HepG2 (cell line): ENCODE measurements at regions of chr1 and their contacts with region 1.

Region 1: DNA sequence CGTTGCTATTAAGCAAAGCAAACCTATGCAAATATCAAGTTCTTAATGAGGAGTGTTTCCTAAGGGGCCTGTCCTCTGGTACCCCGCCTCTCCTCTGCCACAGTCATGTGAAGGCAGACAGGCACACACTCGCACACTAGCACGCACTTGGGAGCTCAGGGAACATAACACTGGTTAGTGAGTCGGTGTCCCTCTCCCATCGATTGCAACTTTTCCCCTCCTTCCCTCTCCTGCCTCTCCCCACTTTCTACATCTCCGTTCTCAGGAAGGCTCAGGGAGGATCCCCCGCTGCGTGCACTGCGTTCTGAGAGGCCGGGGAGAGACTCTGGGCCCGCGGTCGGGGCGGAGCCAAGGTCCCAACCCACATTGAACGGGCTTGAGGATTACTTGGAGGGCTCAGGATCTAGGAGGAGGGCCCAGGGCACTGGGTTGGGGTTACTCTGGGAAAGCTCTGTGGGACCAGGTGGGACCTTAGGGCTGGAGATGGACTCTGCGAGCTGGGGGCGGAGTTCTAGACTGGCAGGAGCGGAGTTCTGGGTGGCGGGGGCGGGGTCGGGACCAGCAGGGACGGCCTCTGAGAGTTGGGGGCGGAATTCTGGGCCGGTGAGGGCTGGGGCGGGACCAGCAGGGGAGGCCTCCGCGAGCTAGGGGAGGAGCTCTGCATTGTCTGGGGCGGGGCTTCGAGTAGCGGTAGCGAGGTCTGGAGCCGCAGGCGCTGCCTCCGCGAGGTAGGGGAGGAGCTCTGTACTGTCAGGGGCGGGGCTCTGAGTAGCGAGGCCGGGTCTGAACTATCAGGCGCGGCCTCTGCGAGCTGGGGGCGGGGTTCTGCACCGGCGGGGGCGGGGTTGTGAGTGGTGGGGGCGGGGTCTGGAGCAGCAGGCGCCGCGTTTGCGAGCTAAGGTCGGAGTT is 533 bp upstream of the LEPR start:
- DNase-seq: peak; percentile 93
- ATAC-seq: peak; percentile 92
- H3K4me3 ChIP-seq: peak overlapping the region; percentile 79 to 94 (median 80)
- H3K27ac ChIP-seq: peak overlapping the region; percentile 99
- H3K4me1 ChIP-seq: peaks cover 59% of the 10 kb centered on the region
- H3K27me3 ChIP-seq: no peaks in the 10 kb centered on the region; a peak in 1 of 5 replicates
- CTCF ChIP-seq: no peak
- EP300 ChIP-seq: no peak
- POLR2A ChIP-seq: peak; percentile 59 to 86; a peak in 3 of 4 replicates
- RAD21 ChIP-seq: no peak

Region 2: GRCh38 chr1:65067491-65068201 is 352.3 kb before region 1 on chr1:
- CTCF ChIA-PET with region 1: no interaction called
- POLR2A ChIA-PET with region 1: interaction called, 3 read pairs
- in situ Hi-C with region 1: no loop called
- intact Hi-C with region 1: loop called (anchors 10 kb)
- DNase-seq: peak; percentile 29
- ATAC-seq: peak; percentile 49
- H3K4me3 ChIP-seq: peak overlapping the region; percentile 64 to 84 (median 74)
- H3K27ac ChIP-seq: peak overlapping the region; percentile 26
- H3K4me1 ChIP-seq: peaks cover 14% of the 10 kb centered on the region; the same call in 1 of the 2 replicates
- H3K27me3 ChIP-seq: peaks cover 0 to 8% of the 10 kb centered on the region in 2 experiments; a peak in 2 of 5 replicates
- CTCF ChIP-seq: no peak
- EP300 ChIP-seq: no peak
- POLR2A ChIP-seq: peak in 1 of 2 experiments; percentile 54; a peak in 2 of 4 replicates
- RAD21 ChIP-seq: no peak

Region 3: GRCh38 chr1:65148548-65149350 is 271.2 kb before region 1 on chr1:
- CTCF ChIA-PET with region 1: no interaction called
- POLR2A ChIA-PET with region 1: interaction called, 3 read pairs
- in situ Hi-C with region 1: no loop called
- intact Hi-C with region 1: loop called (anchors 10 kb)
- DNase-seq: no peak
- ATAC-seq: peak; percentile 41
- H3K4me3 ChIP-seq: peak overlapping the region; percentile 75 to 90 (median 86)
- H3K27ac ChIP-seq: peak overlapping the region; percentile 78
- H3K4me1 ChIP-seq: peaks cover 69% of the 10 kb centered on the region
- H3K27me3 ChIP-seq: no peaks in the 10 kb centered on the region; a peak in 1 of 5 replicates
- CTCF ChIP-seq: 0 out of 2 replicates have a peak, but pooled peaks have one; percentile 3
- EP300 ChIP-seq: no peak
- POLR2A ChIP-seq: peak in 1 of 2 experiments; percentile 49; a peak in 2 of 4 replicates
- RAD21 ChIP-seq: no peak; the same call in 1 of the 2 replicates

Region 4: DNA sequence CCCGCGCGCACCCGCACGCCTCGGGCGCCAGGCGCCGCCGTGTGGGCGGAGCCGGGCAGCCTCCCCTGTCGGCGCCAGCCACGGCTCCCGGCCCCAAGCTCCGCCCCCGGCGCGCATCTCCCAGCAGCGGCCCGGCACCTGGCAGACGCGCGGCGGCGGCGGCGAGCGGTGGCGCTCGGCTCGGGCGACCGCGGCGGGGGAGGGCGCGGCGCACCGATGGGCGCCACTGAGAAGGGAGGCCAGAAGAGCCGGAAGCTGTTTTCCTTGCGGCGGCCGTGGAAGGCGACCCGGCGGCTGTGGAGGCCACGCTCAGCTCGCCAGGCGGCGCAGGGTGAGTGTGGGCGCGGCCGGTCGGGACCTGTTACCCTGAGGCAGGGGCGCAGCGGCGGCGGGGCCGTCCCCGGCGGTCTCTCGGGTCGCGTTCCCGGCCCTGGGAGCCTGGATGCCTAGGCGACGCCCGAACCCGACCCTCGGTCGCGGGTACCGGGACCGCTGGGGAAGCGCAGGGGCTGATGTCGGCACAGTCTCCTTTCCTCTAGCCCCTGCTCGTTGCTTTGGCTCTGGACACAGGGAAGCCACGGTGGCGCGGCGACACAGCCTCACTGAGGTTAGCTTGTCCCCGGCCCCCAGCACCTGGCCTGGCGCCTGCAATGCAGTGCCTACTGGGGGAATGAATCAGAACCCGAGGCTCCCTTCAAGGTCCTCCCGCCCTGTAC is 165.5 kb before region 1 on chr1:
- CTCF ChIA-PET with region 1: no interaction called
- POLR2A ChIA-PET with region 1: no interaction called
- in situ Hi-C with region 1: loop called (anchors 10 kb)
- intact Hi-C with region 1: loop called (anchors 5 kb)
- DNase-seq: peak; percentile 38
- ATAC-seq: peak; percentile 93
- H3K4me3 ChIP-seq: peak overlapping the region; percentile 69 to 88 (median 86)
- H3K27ac ChIP-seq: no peak overlapping the region
- H3K4me1 ChIP-seq: peaks cover 22% of the 10 kb centered on the region
- H3K27me3 ChIP-seq: no peaks in the 10 kb centered on the region; a peak in 1 of 5 replicates
- CTCF ChIP-seq: peak; percentile 31; the same call in 1 of the 2 replicates
- EP300 ChIP-seq: no peak
- POLR2A ChIP-seq: peak in 1 of 2 experiments; percentile 56; a peak in 2 of 4 replicates
- RAD21 ChIP-seq: peak; percentile 47

Region 5: DNA sequence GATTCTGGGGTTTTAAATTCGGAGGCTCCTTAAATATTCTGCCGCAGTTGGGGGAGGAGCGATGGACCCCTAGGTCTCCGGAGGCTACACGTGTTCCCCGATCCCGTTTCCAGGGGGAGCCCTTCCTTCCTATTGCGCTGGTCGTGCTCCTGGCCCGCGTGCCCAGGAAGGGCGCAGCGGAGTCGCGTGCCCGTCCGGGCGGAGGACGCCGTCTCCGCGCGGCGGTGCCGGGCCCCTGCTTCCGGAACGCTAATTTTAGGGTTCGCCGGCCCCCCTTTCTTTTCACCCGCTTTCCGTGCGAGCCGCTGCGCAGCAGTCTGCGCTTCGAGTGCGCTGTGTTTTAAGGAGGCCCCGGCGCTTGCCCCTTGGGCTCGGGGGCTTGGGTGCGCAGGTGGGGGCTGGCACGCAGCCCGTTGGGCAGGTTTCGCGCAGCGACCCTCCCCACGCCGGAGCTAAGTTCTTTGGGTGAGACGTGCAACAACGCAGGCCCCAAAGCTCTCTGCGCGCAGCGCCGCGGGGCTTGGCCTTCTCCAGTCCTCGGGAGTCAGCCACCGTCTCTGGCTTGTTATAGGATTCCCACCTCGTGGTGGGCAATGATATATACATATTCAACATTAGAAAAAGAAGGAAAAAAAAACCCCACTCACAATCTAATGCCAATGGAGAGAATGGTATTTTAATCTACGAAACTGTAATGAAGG is 154.1 kb before region 1 on chr1:
- CTCF ChIA-PET with region 1: no interaction called
- POLR2A ChIA-PET with region 1: interaction called, 10 read pairs
- in situ Hi-C with region 1: no loop called
- intact Hi-C with region 1: loop called (anchors 5 kb)
- DNase-seq: peak; percentile 57
- ATAC-seq: peak; percentile 97
- H3K4me3 ChIP-seq: peak overlapping the region; percentile 58 to 67 (median 59)
- H3K27ac ChIP-seq: no peak overlapping the region
- H3K4me1 ChIP-seq: peaks cover 20% of the 10 kb centered on the region
- H3K27me3 ChIP-seq: no peaks in the 10 kb centered on the region
- CTCF ChIP-seq: peak; percentile 72
- EP300 ChIP-seq: no peak
- POLR2A ChIP-seq: no peak
- RAD21 ChIP-seq: no peak

Region 6: GRCh38 chr1:65309304-65310077 is 110.4 kb before region 1 on chr1 and contains the start of gene DNAJC6:
- CTCF ChIA-PET with region 1: no interaction called
- POLR2A ChIA-PET with region 1: interaction called, 11 read pairs
- in situ Hi-C with region 1: no loop called
- intact Hi-C with region 1: loop called (anchors 2 kb)
- DNase-seq: peak; percentile 20
- ATAC-seq: peak; percentile 99
- H3K4me3 ChIP-seq: peak within 1 kb of the TSS; percentile 30 to 62 (median 59)
- H3K27ac ChIP-seq: no peak within 1 kb of the TSS
- H3K4me1 ChIP-seq: peaks cover 19% of the 10 kb centered on the region
- H3K27me3 ChIP-seq: 0 out of 5 replicates have a peak, but pooled peaks cover 0 to 4% of the 10 kb centered on the region in 2 experiments
- CTCF ChIP-seq: peak; percentile 43
- EP300 ChIP-seq: no peak
- POLR2A ChIP-seq: no peak
- RAD21 ChIP-seq: peak; percentile 35; the same call in 1 of the 2 replicates
- total RNA-seq, gene DNAJC6: 0.80 and 1.0 TPM in 2 replicates

Region 7: DNA sequence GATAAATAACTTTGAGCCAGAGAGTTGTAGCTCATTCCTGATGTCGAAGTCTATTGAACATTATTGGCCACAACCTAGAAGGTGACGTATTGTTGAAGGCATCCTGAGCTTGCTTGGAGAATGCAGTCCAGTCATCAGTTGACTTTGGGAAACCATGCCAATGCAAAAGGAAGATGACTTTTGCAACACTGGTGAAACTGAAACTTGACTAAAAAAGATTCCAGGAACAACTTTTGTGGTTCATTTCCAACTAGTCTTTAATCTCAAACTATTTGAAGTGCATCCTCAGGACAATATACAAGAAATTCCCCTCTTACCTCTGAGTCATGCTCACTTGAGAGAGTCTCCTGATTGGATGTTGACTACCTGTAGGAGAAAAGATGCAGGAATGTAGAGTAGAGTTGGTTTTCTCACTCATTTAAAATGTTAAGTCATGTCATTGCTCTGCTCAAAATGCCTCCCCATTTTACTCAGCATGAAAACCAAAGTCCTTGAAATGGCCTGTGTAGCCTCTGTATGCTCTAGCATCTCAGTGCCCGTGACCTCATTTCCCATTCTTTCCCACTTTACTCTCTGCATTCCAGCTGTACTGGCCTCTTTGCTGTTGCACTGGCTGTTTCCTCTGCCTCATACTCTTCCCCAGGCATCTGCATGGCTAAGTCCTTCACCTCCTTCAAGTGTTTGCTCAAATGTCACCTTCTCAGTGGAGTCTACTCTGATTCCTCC is 23.9 kb before region 1 on chr1:
- CTCF ChIA-PET with region 1: no interaction called
- POLR2A ChIA-PET with region 1: no interaction called
- in situ Hi-C with region 1: no loop called
- intact Hi-C with region 1: no loop called
- DNase-seq: no peak
- ATAC-seq: no peak
- H3K4me3 ChIP-seq: no peak overlapping the region
- H3K27ac ChIP-seq: no peak overlapping the region
- H3K4me1 ChIP-seq: 0 out of 2 replicates have a peak, but pooled peaks cover under 1% of the 10 kb centered on the region
- H3K27me3 ChIP-seq: no peaks in the 10 kb centered on the region
- CTCF ChIP-seq: no peak
- EP300 ChIP-seq: no peak
- POLR2A ChIP-seq: no peak
- RAD21 ChIP-seq: no peak

Region 8: GRCh38 chr1:65467536-65467935 is 47.6 kb after region 1 on chr1:
- CTCF ChIA-PET with region 1: no interaction called
- POLR2A ChIA-PET with region 1: interaction called, 26 read pairs
- in situ Hi-C with region 1: no loop called
- intact Hi-C with region 1: loop called (anchors 5 kb)
- DNase-seq: peak; percentile 95
- ATAC-seq: peak; percentile 94
- H3K4me3 ChIP-seq: peak overlapping the region in 1 of 3 experiments; percentile 54; a peak in 2 of 6 replicates
- H3K27ac ChIP-seq: peak overlapping the region; percentile 50
- H3K4me1 ChIP-seq: peaks cover 61% of the 10 kb centered on the region
- H3K27me3 ChIP-seq: no peaks in the 10 kb centered on the region
- CTCF ChIP-seq: peak; percentile 57
- EP300 ChIP-seq: peak in 1 of 2 experiments; percentile 75; a peak in 2 of 4 replicates
- POLR2A ChIP-seq: no peak
- RAD21 ChIP-seq: peak; percentile 46